ENCODE measurements at regions of chr14 and their contacts with region 1.

Region 1: DNA sequence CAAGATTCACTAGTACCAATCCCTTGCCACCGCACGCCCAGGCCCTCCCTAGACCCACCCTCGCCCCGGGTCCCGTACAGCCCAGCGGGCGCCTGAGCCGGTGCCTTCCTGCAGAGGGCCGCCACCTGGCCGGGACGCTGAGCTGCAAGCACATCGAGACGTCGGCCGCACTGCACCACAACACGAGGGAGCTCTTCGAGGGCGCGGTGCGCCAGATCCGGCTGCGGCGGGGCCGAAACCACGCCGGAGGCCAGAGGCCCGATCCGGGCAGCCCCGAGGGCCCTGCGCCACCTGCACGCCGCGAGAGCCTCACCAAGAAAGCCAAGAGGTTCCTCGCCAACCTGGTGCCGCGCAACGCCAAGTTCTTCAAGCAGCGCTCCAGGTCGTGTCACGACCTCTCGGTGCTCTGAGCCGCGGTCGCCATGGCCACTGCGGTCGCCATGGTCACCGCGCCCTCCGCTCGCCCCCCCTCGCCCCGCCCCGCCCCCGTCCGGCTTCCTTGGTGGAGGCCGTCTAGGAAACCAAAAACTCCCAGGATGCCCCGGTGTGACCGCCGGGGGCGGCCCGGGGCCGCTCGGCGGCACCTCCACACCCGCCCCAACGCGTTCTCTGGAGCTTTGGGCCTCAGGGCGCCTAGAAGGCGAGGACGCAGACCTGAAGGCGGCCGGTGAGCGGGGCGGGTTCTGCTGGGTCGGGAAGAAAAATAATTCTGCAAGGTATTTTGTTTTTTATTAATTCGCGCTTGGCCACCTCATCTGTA is 3.7 kb downstream of the REM2 start:
- DNase-seq: peak; percentile 82
- H3K4me3 Mint-ChIP-seq: peak overlapping the region; percentile 95
- H3K27ac Mint-ChIP-seq: peak overlapping the region; percentile 90
- H3K4me1 Mint-ChIP-seq: peaks cover 25% of the 10 kb centered on the region
- H3K27me3 Mint-ChIP-seq: no peaks in the 10 kb centered on the region
- CTCF ChIP-seq: no peak

Region 2: GRCh38 chr14:22872033-22872832 is 14.4 kb before region 1 on chr14:
- CTCF ChIA-PET with region 1: interaction called, 86 read pairs
- POLR2A ChIA-PET with region 1: interaction called, 116 read pairs
- intact Hi-C with region 1: loop called (anchors 1 kb)
- DNase-seq: peak; percentile 90
- H3K4me3 Mint-ChIP-seq: peak overlapping the region; percentile 79
- H3K27ac Mint-ChIP-seq: peak overlapping the region; percentile 91
- H3K4me1 Mint-ChIP-seq: peaks cover 20% of the 10 kb centered on the region
- H3K27me3 Mint-ChIP-seq: no peaks in the 10 kb centered on the region
- CTCF ChIP-seq: peak; percentile 81

Region 3: GRCh38 chr14:22918804-22919600 is 32.3 kb after region 1 on chr14 and contains the start of gene RBM23:
- CTCF ChIA-PET with region 1: interaction called, 5 read pairs
- POLR2A ChIA-PET with region 1: interaction called, 11 read pairs
- intact Hi-C with region 1: no loop called
- DNase-seq: peak; percentile 100
- H3K4me3 Mint-ChIP-seq: peak within 1 kb of the TSS; percentile 87
- H3K27ac Mint-ChIP-seq: peak within 1 kb of the TSS; percentile 100
- H3K4me1 Mint-ChIP-seq: peaks cover 31% of the 10 kb centered on the region
- H3K27me3 Mint-ChIP-seq: no peaks in the 10 kb centered on the region
- CTCF ChIP-seq: no peak
- total RNA-seq, gene RBM23: 57.6 and 60.6 TPM in 2 replicates

Region 4: GRCh38 chr14:22939684-22940083 is 53.0 kb after region 1 on chr14:
- CTCF ChIA-PET with region 1: no interaction called
- POLR2A ChIA-PET with region 1: no interaction called
- intact Hi-C with region 1: no loop called
- DNase-seq: no peak
- H3K4me3 Mint-ChIP-seq: no peak overlapping the region
- H3K27ac Mint-ChIP-seq: no peak overlapping the region
- H3K4me1 Mint-ChIP-seq: no peaks in the 10 kb centered on the region
- H3K27me3 Mint-ChIP-seq: no peaks in the 10 kb centered on the region
- CTCF ChIP-seq: no peak

Region 5: GRCh38 chr14:23245282-23245681 is 358.6 kb after region 1 on chr14:
- CTCF ChIA-PET with region 1: no interaction called
- POLR2A ChIA-PET with region 1: no interaction called
- intact Hi-C with region 1: no loop called
- DNase-seq: no peak
- H3K4me3 Mint-ChIP-seq: no peak overlapping the region
- H3K27ac Mint-ChIP-seq: no peak overlapping the region
- H3K4me1 Mint-ChIP-seq: no peaks in the 10 kb centered on the region
- H3K27me3 Mint-ChIP-seq: no peaks in the 10 kb centered on the region
- CTCF ChIP-seq: no peak

Region 6: DNA sequence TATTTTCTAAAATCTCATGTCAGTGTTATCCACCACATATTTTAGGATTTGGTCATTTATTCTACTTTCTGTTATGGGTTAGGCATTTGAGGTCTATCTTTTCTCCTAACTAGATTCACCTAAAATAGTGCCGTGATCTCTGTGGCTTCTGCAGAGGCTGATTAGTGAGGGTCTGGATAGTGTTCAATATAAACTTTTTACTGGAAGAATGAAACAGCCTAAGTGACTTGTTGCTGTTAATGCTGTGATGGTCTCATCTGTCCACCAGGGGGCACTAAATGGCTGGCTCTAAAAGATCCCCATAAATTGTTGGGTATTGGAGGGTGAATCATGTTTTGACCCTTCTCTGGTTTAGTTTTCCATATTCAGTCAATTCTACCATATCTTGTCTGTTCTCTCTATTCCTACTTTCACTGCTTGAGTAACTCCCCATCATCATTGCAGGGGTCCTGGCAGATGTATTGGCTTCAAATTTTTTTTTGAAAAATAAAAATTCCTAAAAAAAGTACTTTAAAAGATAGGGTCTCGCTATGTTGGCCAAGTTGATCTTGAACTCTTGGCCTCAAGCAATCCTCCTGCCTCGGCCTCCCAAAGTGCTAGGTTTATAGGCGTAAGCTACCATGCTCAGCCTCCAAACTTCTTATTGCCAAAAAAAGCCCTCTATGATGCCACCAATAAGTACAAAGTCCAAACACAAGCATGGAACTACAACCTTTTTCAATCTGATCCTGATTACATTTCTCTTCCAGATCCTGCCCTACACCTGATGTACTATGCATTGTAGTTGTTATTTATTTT is 441.5 kb after region 1 on chr14:
- CTCF ChIA-PET with region 1: no interaction called
- POLR2A ChIA-PET with region 1: no interaction called
- intact Hi-C with region 1: no loop called
- DNase-seq: peak; percentile 78
- H3K4me3 Mint-ChIP-seq: no peak overlapping the region
- H3K27ac Mint-ChIP-seq: no peak overlapping the region
- H3K4me1 Mint-ChIP-seq: peaks cover 11% of the 10 kb centered on the region
- H3K27me3 Mint-ChIP-seq: no peaks in the 10 kb centered on the region
- CTCF ChIP-seq: peak; percentile 80

Measured in MCF 10A (cell line).